Activated naive CD4-positive, alpha-beta T cell treated with anti-CD3 and anti-CD28 coated beads for 36 hours (primary cell): ENCODE measurements at regions of chrX and their contacts with region 1.

Region 1: GRCh38 chrX:56248492-56248891 is 16.3 kb downstream of the KLF8 start:
- DNase-seq: peak; percentile 70
- H3K4me3 Mint-ChIP-seq: no peak overlapping the region
- H3K27ac Mint-ChIP-seq: no peak overlapping the region
- H3K4me1 Mint-ChIP-seq: peaks cover 2% of the 10 kb centered on the region
- H3K27me3 Mint-ChIP-seq: no peaks in the 10 kb centered on the region

Region 2: GRCh38 chrX:55098691-55099090 is 1149.8 kb before region 1 on chrX:
- CTCF ChIA-PET with region 1: no interaction called
- intact Hi-C with region 1: no loop called
- DNase-seq: no peak
- H3K4me3 Mint-ChIP-seq: no peak overlapping the region
- H3K27ac Mint-ChIP-seq: no peak overlapping the region
- H3K4me1 Mint-ChIP-seq: no peaks in the 10 kb centered on the region
- H3K27me3 Mint-ChIP-seq: no peaks in the 10 kb centered on the region

Region 3: GRCh38 chrX:55135171-55135570 is 1113.3 kb before region 1 on chrX:
- CTCF ChIA-PET with region 1: interaction called, 4 read pairs
- intact Hi-C with region 1: loop called (anchors 1 kb)
- DNase-seq: peak; percentile 56
- H3K4me3 Mint-ChIP-seq: no peak overlapping the region
- H3K27ac Mint-ChIP-seq: no peak overlapping the region
- H3K4me1 Mint-ChIP-seq: no peaks in the 10 kb centered on the region
- H3K27me3 Mint-ChIP-seq: no peaks in the 10 kb centered on the region

Region 4: GRCh38 chrX:55794405-55794804 is 454.1 kb before region 1 on chrX:
- CTCF ChIA-PET with region 1: no interaction called
- intact Hi-C with region 1: loop called (anchors 10 kb)
- DNase-seq: peak; percentile 52
- H3K4me3 Mint-ChIP-seq: no peak overlapping the region
- H3K27ac Mint-ChIP-seq: no peak overlapping the region
- H3K4me1 Mint-ChIP-seq: peaks cover 4% of the 10 kb centered on the region
- H3K27me3 Mint-ChIP-seq: no peaks in the 10 kb centered on the region

Region 5: DNA sequence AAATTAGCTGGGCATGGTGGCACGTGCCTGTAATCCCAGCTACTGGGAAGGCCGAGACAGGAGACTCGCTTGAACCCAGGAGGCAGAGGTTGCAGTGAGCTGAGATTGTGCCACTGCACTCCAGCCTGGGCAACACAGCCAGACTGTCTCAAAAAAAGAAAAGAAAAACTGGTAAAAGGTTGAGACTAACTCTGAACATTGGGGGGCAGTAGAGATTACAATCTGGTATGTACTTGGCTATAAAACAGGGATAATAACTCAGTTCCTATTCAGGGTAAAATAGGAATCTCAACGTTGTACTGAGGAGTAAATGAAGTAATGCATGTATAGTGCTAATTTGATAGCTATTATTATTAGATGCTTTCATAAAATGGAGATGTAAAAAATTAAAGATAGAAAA is 28.8 kb before region 1 on chrX:
- CTCF ChIA-PET with region 1: interaction called, 13 read pairs
- intact Hi-C with region 1: loop called (anchors 2 kb)
- DNase-seq: no peak
- H3K4me3 Mint-ChIP-seq: no peak overlapping the region
- H3K27ac Mint-ChIP-seq: no peak overlapping the region
- H3K4me1 Mint-ChIP-seq: no peaks in the 10 kb centered on the region
- H3K27me3 Mint-ChIP-seq: no peaks in the 10 kb centered on the region

Region 6: GRCh38 chrX:56733459-56734046 is 485.1 kb after region 1 on chrX:
- CTCF ChIA-PET with region 1: no interaction called
- intact Hi-C with region 1: no loop called
- DNase-seq: peak; percentile 74
- H3K4me3 Mint-ChIP-seq: no peak overlapping the region
- H3K27ac Mint-ChIP-seq: no peak overlapping the region
- H3K4me1 Mint-ChIP-seq: peaks cover 21% of the 10 kb centered on the region
- H3K27me3 Mint-ChIP-seq: no peaks in the 10 kb centered on the region